ENCODE measurements at regions of chr16 and their contacts with region 1.

Region 1: GRCh38 chr16:86519649-86520316 is 9.5 kb downstream of the FOXF1 start:
- DNase-seq: peak; percentile 53 to 77
- ATAC-seq: peak; percentile 26 to 70; a peak in 3 of 6 replicates
- H3K4me3 ChIP-seq: peak overlapping the region; percentile 21; the same call in 1 of the 3 replicates
- H3K27ac ChIP-seq: no peak overlapping the region
- H3K4me1 ChIP-seq: no peaks in the 10 kb centered on the region
- CTCF ChIP-seq: peak; percentile 94
- EP300 ChIP-seq: no peak
- POLR2A ChIP-seq: no peak
- RAD21 ChIP-seq: peak; percentile 82 to 85

Region 2: GRCh38 chr16:85821441-85822135 is 698.2 kb before region 1 on chr16:
- CTCF ChIA-PET with region 1: interaction called, 74 read pairs
- POLR2A ChIA-PET with region 1: no interaction called
- DNase-seq: peak; percentile 76 to 92
- ATAC-seq: peak; percentile 87 to 92
- H3K4me3 ChIP-seq: no peak overlapping the region
- H3K27ac ChIP-seq: no peak overlapping the region
- H3K4me1 ChIP-seq: no peaks in the 10 kb centered on the region
- CTCF ChIP-seq: peak; percentile 94
- EP300 ChIP-seq: no peak
- POLR2A ChIP-seq: no peak
- RAD21 ChIP-seq: peak; percentile 98 to 99

Region 3: GRCh38 chr16:86059253-86060171 is 460.3 kb before region 1 on chr16:
- CTCF ChIA-PET with region 1: interaction called, 45 read pairs
- POLR2A ChIA-PET with region 1: no interaction called
- DNase-seq: no peak
- ATAC-seq: no peak
- H3K4me3 ChIP-seq: no peak overlapping the region
- H3K27ac ChIP-seq: no peak overlapping the region
- H3K4me1 ChIP-seq: no peaks in the 10 kb centered on the region
- CTCF ChIP-seq: no peak
- EP300 ChIP-seq: no peak
- POLR2A ChIP-seq: no peak
- RAD21 ChIP-seq: no peak

Region 4: DNA sequence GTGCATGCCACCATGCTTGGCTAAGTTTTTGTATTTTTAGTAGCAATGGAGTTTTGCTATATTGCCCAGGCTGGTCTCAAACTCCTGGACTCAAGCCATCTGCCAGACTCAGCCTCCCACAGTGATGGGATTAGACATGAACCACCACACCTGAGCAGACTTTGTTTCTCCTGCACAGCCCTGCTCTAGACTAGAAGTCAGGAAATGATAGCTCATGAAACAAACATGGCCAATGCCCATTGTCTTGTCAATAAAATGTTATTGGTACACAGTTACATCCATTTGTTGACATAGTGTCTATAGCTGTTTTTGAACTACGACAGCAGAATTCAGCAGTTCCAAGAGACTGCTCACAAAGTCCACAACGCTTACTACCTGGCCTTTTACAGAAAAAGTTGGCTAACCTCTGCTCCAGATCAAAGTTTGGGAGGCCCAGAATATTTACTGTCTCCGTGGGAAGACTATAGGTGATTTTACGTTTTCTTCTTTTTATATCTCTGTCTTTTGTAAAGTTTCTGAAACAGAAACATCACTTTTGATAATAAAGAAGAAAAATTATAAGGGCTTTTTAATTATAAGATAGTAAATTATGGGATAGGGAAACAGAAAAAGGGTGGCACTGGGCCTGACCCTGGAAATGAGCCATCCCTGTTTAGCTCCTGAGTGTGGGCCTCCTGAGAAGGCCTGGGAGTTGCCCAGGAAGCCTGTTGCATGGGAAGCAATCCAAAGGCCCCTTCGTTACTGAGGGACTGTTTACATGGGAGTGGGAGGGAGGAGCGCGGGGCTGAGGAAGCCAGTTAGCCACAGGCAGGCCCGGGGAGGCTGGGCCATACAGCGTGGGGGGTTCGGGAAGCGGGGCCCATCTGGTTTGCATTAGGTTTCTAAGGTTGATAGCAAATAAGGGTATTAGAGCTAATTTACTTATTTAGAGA is 419.3 kb before region 1 on chr16:
- CTCF ChIA-PET with region 1: interaction called, 11 read pairs
- POLR2A ChIA-PET with region 1: no interaction called
- DNase-seq: no peak
- ATAC-seq: no peak
- H3K4me3 ChIP-seq: no peak overlapping the region
- H3K27ac ChIP-seq: no peak overlapping the region
- H3K4me1 ChIP-seq: no peaks in the 10 kb centered on the region
- CTCF ChIP-seq: no peak
- EP300 ChIP-seq: no peak
- POLR2A ChIP-seq: no peak
- RAD21 ChIP-seq: no peak

Region 5: GRCh38 chr16:86462334-86463084 is 57.3 kb before region 1 on chr16:
- CTCF ChIA-PET with region 1: interaction called, 10 read pairs
- POLR2A ChIA-PET with region 1: no interaction called
- DNase-seq: no peak
- ATAC-seq: no peak
- H3K4me3 ChIP-seq: no peak overlapping the region
- H3K27ac ChIP-seq: no peak overlapping the region
- H3K4me1 ChIP-seq: no peaks in the 10 kb centered on the region
- CTCF ChIP-seq: no peak
- EP300 ChIP-seq: no peak
- POLR2A ChIP-seq: no peak
- RAD21 ChIP-seq: no peak

Region 6: DNA sequence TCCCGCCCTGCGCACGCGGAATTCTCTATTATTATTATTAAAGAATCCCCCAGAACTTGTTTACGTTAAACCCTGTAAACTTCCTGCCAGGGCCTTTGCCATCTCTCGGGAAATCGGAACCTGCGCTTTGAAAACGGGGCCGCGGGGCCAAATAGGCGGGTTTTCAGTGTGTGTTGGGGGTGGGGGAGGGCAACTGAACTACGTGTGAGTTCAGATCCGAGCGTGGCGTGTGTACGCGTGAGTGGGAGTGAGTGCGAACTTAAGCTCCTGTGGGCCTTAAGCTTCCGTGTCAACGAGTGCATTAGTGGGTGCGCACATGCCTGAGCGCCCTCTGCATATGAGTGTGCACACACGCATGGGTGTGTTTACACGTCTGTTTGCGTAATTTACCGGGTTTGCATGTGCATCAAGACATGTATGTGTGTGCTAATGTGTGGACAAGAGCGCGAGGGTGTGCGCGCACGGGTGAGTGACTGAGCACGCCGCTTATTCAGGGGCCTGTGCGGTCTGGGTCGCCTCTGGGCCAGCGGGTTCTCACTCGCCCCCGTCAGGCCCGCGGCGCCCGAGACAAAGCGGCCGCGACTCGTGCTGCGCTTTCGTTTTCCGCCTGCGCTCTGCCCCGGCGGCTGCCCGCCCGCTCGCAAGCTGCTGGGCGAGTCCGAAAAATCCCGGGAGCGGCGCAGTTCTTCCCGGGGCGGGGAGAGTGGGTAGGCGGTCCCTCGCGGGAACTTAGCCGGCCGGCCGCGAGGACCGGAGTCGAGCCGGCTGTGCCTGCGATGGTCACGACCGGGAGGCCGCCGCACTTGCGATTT is 10.6 kb before region 1 on chr16:
- CTCF ChIA-PET with region 1: interaction called, 16 read pairs
- POLR2A ChIA-PET with region 1: no interaction called
- DNase-seq: peak in 1 of 2 experiments; percentile 41
- ATAC-seq: peak in 1 of 2 experiments; percentile 40; a peak in 3 of 6 replicates
- H3K4me3 ChIP-seq: peak overlapping the region; percentile 46
- H3K27ac ChIP-seq: no peak overlapping the region; a peak in 1 of 6 replicates
- H3K4me1 ChIP-seq: peaks cover 19% of the 10 kb centered on the region
- CTCF ChIP-seq: no peak
- EP300 ChIP-seq: no peak
- POLR2A ChIP-seq: no peak
- RAD21 ChIP-seq: no peak

Region 7: GRCh38 chr16:86718118-86718517 is 198.3 kb after region 1 on chr16:
- CTCF ChIA-PET with region 1: no interaction called
- POLR2A ChIA-PET with region 1: no interaction called
- DNase-seq: peak in 1 of 2 experiments; percentile 4
- ATAC-seq: no peak
- H3K4me3 ChIP-seq: no peak overlapping the region
- H3K27ac ChIP-seq: no peak overlapping the region
- H3K4me1 ChIP-seq: no peaks in the 10 kb centered on the region
- CTCF ChIP-seq: no peak
- EP300 ChIP-seq: no peak
- POLR2A ChIP-seq: no peak
- RAD21 ChIP-seq: no peak

Region 8: DNA sequence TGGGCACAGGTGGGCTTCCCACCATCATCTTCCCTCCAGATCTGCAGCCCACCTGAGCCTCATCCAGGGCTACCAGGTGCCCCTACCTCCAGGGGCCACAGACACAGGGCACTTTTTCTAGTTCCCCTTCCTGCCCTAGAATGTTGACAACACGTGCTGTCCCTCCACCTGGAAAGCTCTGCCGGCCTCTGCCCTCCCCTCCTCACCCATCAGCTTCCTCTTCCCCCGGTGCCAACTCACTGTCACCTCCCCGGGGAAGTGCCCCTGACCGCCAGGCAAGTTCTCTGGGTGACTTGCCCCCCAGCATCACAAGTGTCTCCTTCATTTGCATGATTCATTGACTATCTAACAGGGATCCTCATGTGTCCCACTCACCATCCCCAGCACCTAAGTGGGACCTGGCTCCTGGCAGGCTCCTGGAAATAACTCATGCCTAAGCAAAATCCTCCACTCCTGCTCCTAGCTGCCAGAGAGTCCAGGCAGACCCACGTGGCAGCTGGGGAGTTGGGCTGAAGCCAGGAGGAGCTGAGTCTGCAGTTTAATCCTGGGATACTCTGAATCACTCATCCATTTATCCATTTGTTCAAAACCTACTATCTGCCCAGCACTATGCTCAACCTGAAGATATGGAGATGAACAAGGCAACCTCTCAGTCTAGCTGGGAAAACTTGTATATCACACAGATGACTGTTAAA is 362.9 kb after region 1 on chr16:
- CTCF ChIA-PET with region 1: no interaction called
- POLR2A ChIA-PET with region 1: no interaction called
- DNase-seq: no peak
- ATAC-seq: peak in 1 of 2 experiments; percentile 56; a peak in 2 of 6 replicates
- H3K4me3 ChIP-seq: no peak overlapping the region
- H3K27ac ChIP-seq: peak overlapping the region; percentile 3 to 64; a peak in 4 of 6 replicates
- H3K4me1 ChIP-seq: peaks cover 44% of the 10 kb centered on the region
- CTCF ChIP-seq: no peak
- EP300 ChIP-seq: no peak
- POLR2A ChIP-seq: no peak
- RAD21 ChIP-seq: no peak

Measured in A549 (cell line).